ENCODE measurements at regions of chr15 and their contacts with region 1.

Region 1: GRCh38 chr15:62945760-62946159 is 96.8 kb upstream of the TPM1 start:
- DNase-seq: no peak
- ATAC-seq: no peak

Region 2: DNA sequence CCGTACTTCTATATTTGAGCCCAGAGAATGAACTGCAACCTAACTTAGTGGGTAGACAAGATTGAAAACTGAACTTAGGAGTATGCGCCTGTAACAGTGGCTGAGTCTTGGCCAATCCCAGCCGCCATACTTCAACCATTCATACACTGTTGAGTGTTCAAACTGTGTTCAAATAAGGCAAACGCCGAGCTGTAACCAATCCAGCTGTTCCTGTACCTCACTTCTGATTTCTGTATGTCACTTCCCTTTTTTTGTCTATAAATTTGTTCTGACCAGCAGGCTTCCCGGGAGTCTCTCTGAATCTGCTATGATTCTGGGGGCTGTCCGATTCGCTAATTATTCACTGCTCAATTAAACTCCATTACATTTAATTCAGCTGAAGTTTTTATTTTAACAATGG is 38.2 kb after region 1 on chr15:
- intact Hi-C with region 1: loop called in 1 of 2 experiments (anchors 5 kb)
- DNase-seq: no peak
- ATAC-seq: no peak

Measured in left cardiac atrium (tissue), 4 donors.